Ovary (tissue), 10 donors: ENCODE measurements at regions of chr12 and their contacts with region 1.

Region 1: GRCh38 chr12:66929121-66929520 is 250.2 kb upstream of the GRIP1 start:
- DNase-seq: no peak
- H3K4me3 ChIP-seq: no peak overlapping the region
- H3K27ac ChIP-seq: no peak overlapping the region
- H3K4me1 ChIP-seq: no peaks in the 10 kb centered on the region
- H3K27me3 ChIP-seq: no peaks in the 10 kb centered on the region
- CTCF ChIP-seq: no peak
- EP300 ChIP-seq: no peak
- POLR2A ChIP-seq: no peak

Region 2: DNA sequence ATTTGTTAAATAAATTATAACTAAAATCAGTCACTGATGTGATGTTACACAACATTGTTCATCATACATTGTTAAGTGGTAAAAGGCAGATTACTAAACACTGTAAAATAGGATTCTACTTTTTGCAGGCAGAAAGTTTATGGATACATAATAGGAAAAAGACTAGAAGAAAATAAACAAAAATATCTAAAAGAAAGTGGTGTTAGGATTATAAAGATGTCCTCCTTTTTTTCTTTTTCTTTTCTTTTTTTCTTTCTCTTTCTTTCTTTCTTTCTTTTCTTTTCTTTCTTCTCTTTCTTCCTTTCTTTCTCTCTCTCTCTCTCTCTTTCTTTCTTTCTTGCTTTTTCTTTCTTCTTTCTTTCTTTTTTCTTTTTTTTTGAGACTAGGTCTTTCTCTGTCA is 666.4 kb before region 1 on chr12:
- intact Hi-C with region 1: no loop called
- DNase-seq: no peak
- H3K4me3 ChIP-seq: no peak overlapping the region
- H3K27ac ChIP-seq: no peak overlapping the region
- H3K4me1 ChIP-seq: no peaks in the 10 kb centered on the region
- H3K27me3 ChIP-seq: no peaks in the 10 kb centered on the region
- CTCF ChIP-seq: no peak
- EP300 ChIP-seq: no peak
- POLR2A ChIP-seq: no peak

Region 3: DNA sequence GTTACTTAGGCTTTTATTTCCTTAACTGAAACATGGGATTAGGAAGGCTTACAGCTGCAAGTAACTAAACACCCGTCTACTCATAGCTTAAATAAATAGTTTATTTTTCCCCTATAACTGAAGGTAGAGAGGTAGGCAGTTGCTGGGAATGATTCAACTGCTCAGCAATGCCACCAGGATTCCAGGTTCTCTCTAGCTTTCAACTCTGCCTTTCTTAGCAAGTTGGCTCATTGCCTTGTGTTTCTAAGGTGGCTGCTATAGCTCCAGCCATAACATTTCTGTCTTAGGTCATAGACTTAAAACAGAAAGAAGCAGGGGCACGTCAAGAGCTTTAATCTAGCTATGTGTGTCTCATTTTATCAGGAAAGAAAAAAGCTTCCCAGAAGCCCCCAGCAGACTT is 1506.7 kb after region 1 on chr12:
- intact Hi-C with region 1: loop called in 1 of 4 experiments (anchors 10 kb)
- DNase-seq: no peak
- H3K4me3 ChIP-seq: no peak overlapping the region
- H3K27ac ChIP-seq: no peak overlapping the region
- H3K4me1 ChIP-seq: no peaks in the 10 kb centered on the region
- H3K27me3 ChIP-seq: no peaks in the 10 kb centered on the region
- CTCF ChIP-seq: no peak
- EP300 ChIP-seq: no peak
- POLR2A ChIP-seq: no peak